Naive thymus-derived CD4-positive, alpha-beta T cell (primary cell): ENCODE measurements at regions of chr19 and their contacts with region 1.

Region 1: GRCh38 chr19:49817964-49818648 is at the start of gene MED25:
- DNase-seq: peak; percentile 87 to 96 (median 94)
- ATAC-seq: peak; percentile 65
- H3K4me3 ChIP-seq: peak within 1 kb of the TSS; percentile 91
- H3K4me3 Mint-ChIP-seq: peak within 1 kb of the TSS; percentile 94 to 100 (median 98)
- H3K27ac ChIP-seq: peak within 1 kb of the TSS; percentile 88
- H3K27ac Mint-ChIP-seq: peak within 1 kb of the TSS; percentile 96 to 100 (median 100)
- H3K4me1 ChIP-seq: peaks cover 11 to 17% of the 10 kb centered on the region in 2 donors
- H3K4me1 Mint-ChIP-seq: peaks cover 20 to 51% (median 39%) of the 10 kb centered on the region in 7 donors
- H3K27me3 ChIP-seq: no peaks in the 10 kb centered on the region
- H3K27me3 Mint-ChIP-seq: no peaks in the 10 kb centered on the region
- total RNA-seq, gene MED25: 36.8 to 75.2 (median 55.4) TPM

Region 2: DNA sequence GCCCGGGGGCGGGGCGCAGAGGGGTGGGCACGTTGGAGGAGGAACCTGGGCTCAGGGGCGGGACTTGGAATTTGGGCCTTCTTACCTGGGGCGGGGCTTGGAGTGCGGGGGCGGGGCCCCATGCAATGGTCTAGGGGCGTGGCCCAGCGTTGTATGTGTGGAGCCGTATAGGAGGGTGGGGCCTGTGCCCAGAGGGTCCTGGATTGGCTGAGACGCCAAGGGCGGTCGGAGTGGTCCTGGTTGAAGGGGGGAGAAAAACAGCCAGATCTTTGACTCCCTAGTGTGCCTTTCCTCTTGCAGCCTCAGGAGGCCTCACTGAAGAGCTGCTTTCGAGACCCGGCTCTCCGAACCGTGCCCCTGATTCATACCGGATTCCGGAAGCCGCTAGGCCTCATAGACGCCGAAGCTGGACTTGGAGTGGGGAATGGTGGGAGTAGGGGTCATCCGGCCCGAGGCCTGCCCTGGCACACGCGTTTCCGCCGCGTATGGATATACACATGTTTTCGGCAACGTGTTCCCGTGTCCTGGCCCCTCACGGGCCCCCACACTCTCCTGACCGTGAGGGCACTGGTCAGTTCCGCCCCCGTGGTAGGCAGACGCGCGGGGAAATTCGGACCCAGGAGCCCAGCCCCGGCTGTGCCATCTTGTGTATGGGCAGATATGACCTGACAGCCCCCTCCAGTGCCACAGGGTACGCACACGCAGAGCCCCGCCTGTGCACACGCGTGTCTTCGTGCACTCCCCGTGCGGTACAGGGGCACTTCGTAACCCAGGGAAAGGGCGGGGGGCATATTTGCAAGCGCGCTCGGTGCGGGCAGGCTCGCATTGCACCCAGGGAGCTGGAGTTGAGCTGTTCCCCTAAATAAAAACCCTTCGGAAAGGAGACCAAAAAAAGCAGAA is 227.8 kb before region 1 on chr19:
- CTCF ChIA-PET with region 1: no interaction called
- POLR2A ChIA-PET with region 1: no interaction called
- intact Hi-C with region 1: loop called (anchors 5 kb)
- DNase-seq: peak; percentile 85 to 98 (median 97)
- ATAC-seq: peak; percentile 90
- H3K4me3 ChIP-seq: peak overlapping the region; percentile 97
- H3K4me3 Mint-ChIP-seq: peak overlapping the region; percentile 85 to 95 (median 94)
- H3K27ac ChIP-seq: peak overlapping the region; percentile 86
- H3K27ac Mint-ChIP-seq: peak overlapping the region; percentile 76 to 95 (median 93)
- H3K4me1 ChIP-seq: peaks cover 15 to 18% of the 10 kb centered on the region in 2 donors
- H3K4me1 Mint-ChIP-seq: peaks cover 26 to 42% (median 31%) of the 10 kb centered on the region in 7 donors
- H3K27me3 ChIP-seq: no peaks in the 10 kb centered on the region
- H3K27me3 Mint-ChIP-seq: peaks cover 0 to 12% (median 0%) of the 10 kb centered on the region in 5 donors

Region 3: GRCh38 chr19:49850473-49851342 is 32.6 kb after region 1 on chr19 and contains the start of gene PTOV1:
- CTCF ChIA-PET with region 1: no interaction called
- POLR2A ChIA-PET with region 1: interaction called, 39 read pairs
- intact Hi-C with region 1: loop called (anchors 1 kb)
- DNase-seq: peak; percentile 78 to 97 (median 88)
- ATAC-seq: peak; percentile 93
- H3K4me3 ChIP-seq: peak within 1 kb of the TSS; percentile 89
- H3K4me3 Mint-ChIP-seq: peak within 1 kb of the TSS; percentile 91 to 96 (median 92)
- H3K27ac ChIP-seq: peak within 1 kb of the TSS; percentile 99
- H3K27ac Mint-ChIP-seq: peak within 1 kb of the TSS; percentile 85 to 98 (median 95)
- H3K4me1 ChIP-seq: peaks cover 7 to 25% of the 10 kb centered on the region in 2 donors
- H3K4me1 Mint-ChIP-seq: peaks cover 22 to 37% (median 33%) of the 10 kb centered on the region in 7 donors
- H3K27me3 ChIP-seq: no peaks in the 10 kb centered on the region
- H3K27me3 Mint-ChIP-seq: peaks cover 0 to 11% (median 0%) of the 10 kb centered on the region in 5 donors
- total RNA-seq, gene PTOV1: 92.8 to 170 (median 160) TPM

Region 4: GRCh38 chr19:49889687-49890348 is 71.7 kb after region 1 on chr19:
- CTCF ChIA-PET with region 1: interaction called, 3 read pairs
- POLR2A ChIA-PET with region 1: no interaction called
- intact Hi-C with region 1: loop called in 1 of 2 experiments (anchors 2 kb)
- DNase-seq: peak; percentile 56 to 81 (median 75)
- ATAC-seq: peak; percentile 87
- H3K4me3 ChIP-seq: peak overlapping the region; percentile 69
- H3K4me3 Mint-ChIP-seq: peak overlapping the region; percentile 70 to 84 (median 79)
- H3K27ac ChIP-seq: no peak overlapping the region
- H3K27ac Mint-ChIP-seq: peak overlapping the region in 5 of 9 donors; percentile 25 to 79 (median 51)
- H3K4me1 ChIP-seq: peaks cover 0 to 5% of the 10 kb centered on the region in 2 donors
- H3K4me1 Mint-ChIP-seq: peaks cover 0 to 16% (median 3%) of the 10 kb centered on the region in 7 donors
- H3K27me3 ChIP-seq: no peaks in the 10 kb centered on the region
- H3K27me3 Mint-ChIP-seq: no peaks in the 10 kb centered on the region

Region 5: DNA sequence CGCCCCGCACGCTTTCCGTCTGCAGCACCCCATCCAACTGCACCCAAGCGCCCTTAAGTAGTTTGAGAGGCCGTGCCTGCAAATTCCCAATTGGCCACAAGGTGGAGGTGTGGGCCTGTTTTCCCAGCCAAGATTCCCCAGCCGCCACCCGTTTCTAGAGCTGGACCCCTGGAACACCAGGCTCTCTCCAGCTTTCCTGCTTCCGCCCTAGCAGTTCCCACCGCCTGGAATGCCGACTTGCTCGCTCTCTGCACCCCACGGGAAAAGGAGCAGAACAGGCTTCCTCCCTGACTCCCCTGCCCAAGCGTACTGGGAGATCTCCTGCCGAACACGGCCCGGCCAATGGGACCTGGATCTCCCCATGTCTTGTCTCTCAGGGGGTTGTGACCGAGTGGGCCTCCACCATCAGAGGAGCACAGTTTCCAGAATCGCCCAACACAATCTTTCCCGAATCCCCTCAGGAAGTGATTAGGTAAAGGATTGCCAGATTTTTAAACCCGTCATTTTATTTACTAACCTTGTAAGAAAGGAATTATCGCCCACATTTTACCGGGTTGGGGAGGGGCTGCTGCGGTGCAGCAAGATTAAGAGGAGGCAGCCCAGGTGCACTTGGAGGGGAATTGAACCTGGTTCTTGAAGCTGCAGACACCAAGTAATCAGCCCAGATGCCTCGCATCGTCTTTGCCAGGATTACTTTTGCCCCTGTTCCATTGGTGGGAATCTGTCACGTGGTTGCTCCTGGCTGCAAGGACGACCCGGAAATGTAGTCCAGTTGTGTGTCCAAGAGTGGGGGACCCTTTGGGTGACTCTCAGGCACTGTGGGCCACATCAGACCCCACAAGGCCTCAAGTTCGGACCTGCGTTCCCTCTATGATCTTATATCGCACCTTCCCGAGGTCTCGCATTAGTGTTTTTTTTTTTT is 550.8 kb after region 1 on chr19:
- CTCF ChIA-PET with region 1: no interaction called
- POLR2A ChIA-PET with region 1: no interaction called
- intact Hi-C with region 1: loop called in 1 of 2 experiments (anchors 10 kb)
- DNase-seq: peak; percentile 56 to 83 (median 74)
- ATAC-seq: peak; percentile 91
- H3K4me3 ChIP-seq: peak overlapping the region; percentile 69
- H3K4me3 Mint-ChIP-seq: peak overlapping the region; percentile 68 to 97 (median 93)
- H3K27ac ChIP-seq: peak overlapping the region; percentile 78
- H3K27ac Mint-ChIP-seq: peak overlapping the region; percentile 60 to 97 (median 91)
- H3K4me1 ChIP-seq: peaks cover under 1 to 4% of the 10 kb centered on the region in 2 donors
- H3K4me1 Mint-ChIP-seq: peaks cover 8 to 45% (median 36%) of the 10 kb centered on the region in 7 donors
- H3K27me3 ChIP-seq: no peaks in the 10 kb centered on the region
- H3K27me3 Mint-ChIP-seq: no peaks in the 10 kb centered on the region